ENCODE measurements at regions of chr9 and their contacts with region 1.

Region 1: GRCh38 chr9:128092199-128092977 is 24.4 kb downstream of the SLC25A25 start:
- DNase-seq: no peak
- H3K4me3 ChIP-seq: no peak overlapping the region
- H3K27ac ChIP-seq: peak overlapping the region; percentile 86 to 91 (median 88)
- H3K4me1 ChIP-seq: peaks cover 14 to 68% (median 37%) of the 10 kb centered on the region in 4 donors
- H3K27me3 ChIP-seq: no peaks in the 10 kb centered on the region
- CTCF ChIP-seq: no peak
- EP300 ChIP-seq: no peak
- POLR2A ChIP-seq: no peak

Region 2: DNA sequence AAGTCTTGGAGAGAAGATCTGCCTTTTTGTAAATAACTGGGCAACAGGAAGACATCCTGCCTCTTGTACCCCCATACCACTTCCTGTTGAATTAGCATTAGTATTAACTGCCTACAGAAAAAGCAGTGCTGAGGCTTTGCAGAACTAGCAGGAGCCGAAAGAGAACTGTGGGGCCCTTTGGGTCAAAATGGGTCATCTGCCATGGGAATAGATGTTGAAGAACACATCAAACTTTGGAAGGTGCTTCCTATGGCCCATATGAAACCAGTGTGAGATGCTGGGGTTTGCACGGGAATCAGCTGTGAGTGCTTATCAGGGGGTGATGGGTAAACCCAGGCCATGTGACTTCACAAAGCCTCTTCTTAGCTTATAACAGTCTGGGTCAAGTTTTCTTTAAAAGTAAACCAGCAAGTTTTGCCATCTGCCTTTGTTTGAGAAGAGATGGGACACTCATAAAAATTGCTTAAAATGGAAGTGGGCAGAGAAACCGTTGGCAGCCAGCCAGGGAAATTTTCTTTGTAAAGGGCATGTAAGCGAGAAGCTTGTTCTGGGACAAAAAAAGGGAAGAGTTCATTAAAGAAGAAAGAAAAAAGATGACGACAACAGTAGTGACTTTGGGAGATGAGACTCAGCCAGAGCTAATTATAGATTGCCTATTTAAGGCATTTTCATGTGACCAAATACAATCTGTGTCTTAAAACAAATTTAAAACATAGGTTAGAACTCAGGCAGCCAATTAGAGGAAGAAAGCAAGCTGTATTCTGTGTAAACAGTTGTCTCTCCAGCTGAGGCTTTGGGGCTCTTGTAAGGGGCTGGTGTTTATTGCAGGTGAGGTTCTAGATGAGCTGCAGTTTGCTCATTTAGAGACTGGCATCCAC is 20.0 kb before region 1 on chr9:
- in situ Hi-C with region 1: no loop called
- intact Hi-C with region 1: loop called (anchors 1 kb)
- DNase-seq: peak; percentile 89
- H3K4me3 ChIP-seq: peak overlapping the region in 1 of 4 donors; percentile 20
- H3K27ac ChIP-seq: peak overlapping the region; percentile 97 to 100 (median 99)
- H3K4me1 ChIP-seq: peaks cover 38 to 84% (median 59%) of the 10 kb centered on the region in 4 donors
- H3K27me3 ChIP-seq: no peaks in the 10 kb centered on the region
- CTCF ChIP-seq: no peak
- EP300 ChIP-seq: no peak
- POLR2A ChIP-seq: no peak

Region 3: DNA sequence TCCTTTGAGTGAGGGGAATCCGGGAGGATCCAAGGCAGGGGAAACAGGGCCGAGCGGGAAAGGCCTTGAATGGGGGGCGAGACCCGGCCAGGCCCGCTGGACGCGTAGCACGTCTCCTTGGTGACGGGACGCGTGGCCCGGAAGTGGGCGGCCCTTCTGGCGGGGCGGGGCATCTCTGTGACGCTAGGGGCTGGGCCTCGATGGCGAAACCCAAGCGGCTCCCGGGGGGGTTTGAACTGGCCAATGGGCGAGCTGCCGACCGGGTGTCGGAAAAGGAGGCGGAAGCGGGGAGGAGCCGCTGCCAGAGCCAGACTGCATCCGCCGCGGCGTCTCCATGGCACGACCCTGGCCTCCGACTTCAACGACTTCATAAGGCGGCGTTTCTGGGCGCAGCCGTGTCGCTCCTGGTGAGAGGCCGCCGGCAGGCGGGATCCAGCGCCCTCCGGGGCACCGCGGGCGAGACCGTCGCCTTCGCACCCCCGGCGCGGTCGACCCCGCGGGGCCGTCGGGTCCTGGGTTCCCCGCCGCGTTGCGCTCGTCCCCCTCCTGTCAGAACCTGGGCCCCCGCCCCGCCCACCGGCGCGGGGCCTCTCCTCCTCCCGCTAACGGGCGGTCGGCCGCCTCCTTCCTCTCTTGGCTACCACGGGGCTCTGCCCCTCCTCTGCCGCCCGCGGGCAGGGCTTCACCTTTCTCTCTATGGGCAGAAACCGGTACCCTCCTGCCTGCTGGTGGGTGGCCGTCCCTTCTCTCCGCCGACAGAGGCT is 363.6 kb after region 1 on chr9 and contains the start of gene ODF2:
- in situ Hi-C with region 1: no loop called
- intact Hi-C with region 1: no loop called
- DNase-seq: peak; percentile 99
- H3K4me3 ChIP-seq: peak within 1 kb of the TSS; percentile 59 to 98 (median 92)
- H3K27ac ChIP-seq: peak within 1 kb of the TSS; percentile 88 to 96 (median 92)
- H3K4me1 ChIP-seq: peaks cover 0 to 11% (median 9%) of the 10 kb centered on the region in 4 donors
- H3K27me3 ChIP-seq: no peaks in the 10 kb centered on the region
- CTCF ChIP-seq: no peak
- EP300 ChIP-seq: no peak
- POLR2A ChIP-seq: peak; percentile 55
- total RNA-seq, gene ODF2: 13.2 to 62.3 (median 19.8) TPM

Measured in transverse colon (tissue), 4 donors.